ENCODE measurements at regions of chr9 and their contacts with region 1.

Region 1: DNA sequence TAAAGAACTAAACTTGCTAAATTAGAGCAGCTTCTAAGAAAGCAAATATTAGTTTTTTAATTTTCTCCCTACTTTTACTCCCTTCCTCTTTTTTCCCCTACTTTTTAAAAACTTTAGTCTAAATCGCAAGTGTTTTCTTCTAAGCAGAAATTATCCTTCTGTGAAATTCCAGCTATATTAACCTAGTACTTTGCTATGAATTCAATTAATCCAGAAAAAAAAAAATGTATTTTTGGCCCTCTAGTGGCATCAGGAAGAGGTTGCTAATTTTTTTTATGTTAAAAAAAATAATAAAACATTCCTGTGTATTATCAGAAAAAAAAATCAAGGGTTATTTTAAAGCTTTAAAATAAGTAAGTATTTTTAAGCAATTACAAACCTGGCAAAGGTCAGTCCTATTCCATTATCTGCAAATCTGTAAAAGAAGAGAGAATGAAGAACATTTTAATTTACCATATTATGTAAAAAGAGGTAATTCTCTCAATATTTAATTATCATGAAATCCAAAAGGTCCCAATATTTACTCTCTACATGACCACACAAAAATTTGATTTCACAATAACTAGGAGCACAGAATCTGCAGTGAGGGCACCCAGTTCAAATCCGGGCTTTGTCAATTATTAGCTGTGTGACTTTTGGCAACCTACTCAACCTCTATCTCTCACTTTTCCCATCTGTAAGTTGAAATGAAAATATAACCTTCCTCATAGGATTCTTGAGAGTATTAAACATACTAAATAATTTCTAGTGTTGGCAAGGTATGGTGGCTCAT is 52.0 kb downstream of the CEMIP2 start:
- DNase-seq: no peak
- ATAC-seq: no peak
- H3K4me3 ChIP-seq: no peak overlapping the region
- H3K27ac ChIP-seq: peak overlapping the region; percentile 38 to 75; a peak in 5 of 6 replicates
- H3K4me1 ChIP-seq: peaks cover 41% of the 10 kb centered on the region
- CTCF ChIP-seq: peak; percentile 59
- EP300 ChIP-seq: no peak
- POLR2A ChIP-seq: no peak
- RAD21 ChIP-seq: peak; percentile 27 to 56

Region 2: GRCh38 chr9:71594541-71594940 is 121.8 kb before region 1 on chr9:
- CTCF ChIA-PET with region 1: no interaction called
- POLR2A ChIA-PET with region 1: no interaction called
- DNase-seq: no peak
- ATAC-seq: no peak
- H3K4me3 ChIP-seq: no peak overlapping the region
- H3K27ac ChIP-seq: no peak overlapping the region
- H3K4me1 ChIP-seq: no peaks in the 10 kb centered on the region
- CTCF ChIP-seq: no peak
- EP300 ChIP-seq: no peak
- POLR2A ChIP-seq: no peak
- RAD21 ChIP-seq: no peak

Region 3: GRCh38 chr9:71683598-71684235 is 32.6 kb before region 1 on chr9:
- CTCF ChIA-PET with region 1: interaction called, 21 read pairs
- POLR2A ChIA-PET with region 1: no interaction called
- DNase-seq: no peak
- ATAC-seq: no peak
- H3K4me3 ChIP-seq: no peak overlapping the region
- H3K27ac ChIP-seq: peak overlapping the region; percentile 93 to 94
- H3K4me1 ChIP-seq: peaks cover 89% of the 10 kb centered on the region
- CTCF ChIP-seq: no peak
- EP300 ChIP-seq: no peak
- POLR2A ChIP-seq: no peak
- RAD21 ChIP-seq: peak; percentile 45 to 48; a peak in 2 of 5 replicates

Region 4: DNA sequence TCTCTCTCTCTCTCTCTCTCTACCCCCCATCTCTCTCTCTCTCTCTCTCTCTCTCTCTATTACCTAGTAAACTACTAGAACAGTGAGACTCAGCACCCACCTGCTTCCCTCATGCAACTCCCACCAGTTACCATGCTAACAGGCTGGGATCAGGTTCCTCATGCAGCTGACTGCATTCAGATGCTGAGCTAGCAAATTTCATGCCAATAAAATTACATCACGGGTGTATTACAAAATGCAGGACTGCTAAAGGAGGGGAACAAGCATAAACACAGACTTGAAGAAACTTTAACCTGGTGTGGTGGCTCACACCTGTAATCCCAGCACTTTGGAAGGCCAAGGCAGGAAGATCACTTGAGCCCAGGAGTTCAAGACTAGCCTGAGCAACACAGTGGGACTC is 24.0 kb before region 1 on chr9:
- CTCF ChIA-PET with region 1: interaction called, 10 read pairs
- POLR2A ChIA-PET with region 1: no interaction called
- DNase-seq: no peak
- ATAC-seq: no peak
- H3K4me3 ChIP-seq: no peak overlapping the region
- H3K27ac ChIP-seq: peak overlapping the region in 1 of 2 experiments; percentile 43; a peak in 3 of 6 replicates
- H3K4me1 ChIP-seq: peaks cover 30% of the 10 kb centered on the region
- CTCF ChIP-seq: no peak
- EP300 ChIP-seq: no peak
- POLR2A ChIP-seq: no peak
- RAD21 ChIP-seq: no peak

Region 5: GRCh38 chr9:71737455-71737854 is 21.1 kb after region 1 on chr9:
- CTCF ChIA-PET with region 1: interaction called, 10 read pairs
- POLR2A ChIA-PET with region 1: no interaction called
- DNase-seq: peak in 1 of 2 experiments; percentile 35
- ATAC-seq: peak in 1 of 2 experiments; percentile 53; a peak in 2 of 6 replicates
- H3K4me3 ChIP-seq: no peak overlapping the region
- H3K27ac ChIP-seq: peak overlapping the region; percentile 68 to 87
- H3K4me1 ChIP-seq: peaks cover 97% of the 10 kb centered on the region
- CTCF ChIP-seq: no peak
- EP300 ChIP-seq: no peak
- POLR2A ChIP-seq: no peak
- RAD21 ChIP-seq: no peak

Measured in A549 (cell line).